T-cell (primary cell): ENCODE measurements at regions of chr5 and their contacts with region 1.

Region 1: GRCh38 chr5:141618804-141619554 is at the start of gene DIAPH1:
- DNase-seq: peak; percentile 94 to 99 (median 97)
- ATAC-seq: peak; percentile 92 to 94 (median 93)
- H3K4me3 ChIP-seq: peak within 1 kb of the TSS; percentile 94 to 97
- H3K4me3 Mint-ChIP-seq: peak within 1 kb of the TSS; percentile 94 to 99 (median 98)
- H3K27ac ChIP-seq: peak within 1 kb of the TSS; percentile 86
- H3K27ac Mint-ChIP-seq: peak within 1 kb of the TSS; percentile 96 to 97
- H3K4me1 ChIP-seq: peaks cover 29 to 39% of the 10 kb centered on the region in 2 experiments
- H3K4me1 Mint-ChIP-seq: peaks cover 49 to 61% (median 59%) of the 10 kb centered on the region in 3 donors
- H3K27me3 ChIP-seq: no peaks in the 10 kb centered on the region
- H3K27me3 Mint-ChIP-seq: no peaks in the 10 kb centered on the region
- total RNA-seq, gene DIAPH1: 190 to 271 (median 211) TPM

Region 2: DNA sequence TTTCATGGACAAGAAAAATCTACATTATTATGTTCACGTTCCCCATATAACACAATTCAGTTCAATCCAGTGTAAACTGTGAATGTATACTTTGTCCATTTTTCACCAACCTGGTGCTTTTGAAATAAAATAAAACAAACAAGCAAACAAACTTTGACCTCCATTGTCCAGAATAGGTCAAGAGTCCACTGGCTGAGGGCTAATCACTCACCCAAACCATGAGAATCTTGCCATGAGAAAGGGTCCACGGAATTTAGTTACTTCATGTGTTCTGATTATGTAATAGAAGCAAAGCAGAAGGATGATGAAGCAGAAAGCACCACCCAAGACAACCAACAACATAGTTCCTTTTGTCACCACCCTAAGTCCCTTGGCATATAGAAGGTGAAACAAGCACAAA is 28.9 kb before region 1 on chr5:
- CTCF ChIA-PET with region 1: interaction called, 70 to 514 read pairs
- POLR2A ChIA-PET with region 1: interaction called, 9 to 20 read pairs
- DNase-seq: no peak
- ATAC-seq: no peak
- H3K4me3 ChIP-seq: no peak overlapping the region
- H3K4me3 Mint-ChIP-seq: no peak overlapping the region
- H3K27ac ChIP-seq: no peak overlapping the region
- H3K27ac Mint-ChIP-seq: no peak overlapping the region
- H3K4me1 ChIP-seq: peaks cover 11 to 20% of the 10 kb centered on the region in 2 experiments
- H3K4me1 Mint-ChIP-seq: peaks cover 44 to 63% (median 62%) of the 10 kb centered on the region in 3 donors
- H3K27me3 ChIP-seq: no peaks in the 10 kb centered on the region
- H3K27me3 Mint-ChIP-seq: no peaks in the 10 kb centered on the region

Region 3: GRCh38 chr5:141598391-141599350 is 20.3 kb before region 1 on chr5:
- CTCF ChIA-PET with region 1: interaction called, 70 to 514 read pairs
- POLR2A ChIA-PET with region 1: interaction called, 4 to 7 read pairs
- DNase-seq: no peak
- ATAC-seq: peak; percentile 61 to 75 (median 71)
- H3K4me3 ChIP-seq: no peak overlapping the region
- H3K4me3 Mint-ChIP-seq: peak overlapping the region; percentile 2 to 47 (median 43)
- H3K27ac ChIP-seq: peak overlapping the region; percentile 60
- H3K27ac Mint-ChIP-seq: peak overlapping the region; percentile 82 to 90
- H3K4me1 ChIP-seq: peaks cover 50 to 61% of the 10 kb centered on the region in 2 experiments
- H3K4me1 Mint-ChIP-seq: peaks cover 75 to 86% (median 83%) of the 10 kb centered on the region in 3 donors
- H3K27me3 ChIP-seq: no peaks in the 10 kb centered on the region
- H3K27me3 Mint-ChIP-seq: no peaks in the 10 kb centered on the region

Region 4: DNA sequence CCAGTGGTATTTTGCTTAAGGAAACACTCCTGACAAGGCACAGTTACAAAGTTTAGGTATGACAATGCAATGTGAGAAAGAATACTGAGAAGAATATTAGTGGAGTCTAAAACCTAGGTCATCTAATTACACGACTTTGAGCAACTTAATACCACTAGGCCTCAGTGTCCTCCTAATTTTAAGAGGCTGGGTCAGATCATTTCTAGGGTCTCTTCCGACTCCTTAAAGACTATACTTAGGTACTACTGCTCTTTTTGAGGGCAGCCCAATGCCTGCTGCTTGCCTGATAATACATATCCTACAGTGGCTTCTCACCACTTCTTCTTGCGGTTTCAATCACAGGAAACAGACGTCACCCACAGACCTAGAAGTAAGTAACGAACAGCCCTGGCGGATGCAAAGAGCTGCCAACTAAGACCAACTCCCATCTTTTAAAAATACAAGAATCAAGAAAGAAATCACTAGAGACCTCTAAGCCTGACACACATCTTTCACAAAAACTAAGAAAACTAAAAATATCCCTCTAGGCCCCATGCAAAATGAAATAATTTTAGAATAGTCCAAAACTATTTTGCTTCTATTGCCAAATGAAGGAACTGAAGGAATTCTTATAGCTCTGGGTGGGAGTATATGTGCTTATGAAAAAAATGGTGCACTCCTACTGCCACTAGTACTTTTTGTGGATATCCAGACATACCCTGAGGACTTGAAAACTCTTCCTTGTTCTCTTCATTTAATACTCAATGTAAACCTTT is 13.3 kb before region 1 on chr5:
- CTCF ChIA-PET with region 1: interaction called, 5 to 86 read pairs
- POLR2A ChIA-PET with region 1: interaction called, 9 to 17 read pairs
- DNase-seq: peak; percentile 35 to 92 (median 75)
- ATAC-seq: peak; percentile 97 to 98 (median 98)
- H3K4me3 ChIP-seq: peak overlapping the region; percentile 32 to 38
- H3K4me3 Mint-ChIP-seq: peak overlapping the region; percentile 63 to 73 (median 72)
- H3K27ac ChIP-seq: peak overlapping the region; percentile 83
- H3K27ac Mint-ChIP-seq: peak overlapping the region; percentile 88 to 92
- H3K4me1 ChIP-seq: peaks cover 49 to 86% of the 10 kb centered on the region in 2 experiments
- H3K4me1 Mint-ChIP-seq: peaks cover 93 to 96% (median 94%) of the 10 kb centered on the region in 3 donors
- H3K27me3 ChIP-seq: no peaks in the 10 kb centered on the region
- H3K27me3 Mint-ChIP-seq: no peaks in the 10 kb centered on the region

Region 5: GRCh38 chr5:141636413-141637122 is 17.6 kb after region 1 on chr5 and contains the starts of genes HDAC3 and RELL2:
- CTCF ChIA-PET with region 1: interaction called, 5 to 62 read pairs
- POLR2A ChIA-PET with region 1: interaction called, 5 to 23 read pairs
- DNase-seq: peak; percentile 78 to 97 (median 90)
- ATAC-seq: peak; percentile 81 to 93 (median 89)
- H3K4me3 ChIP-seq: peak within 1 kb of the TSS; percentile 90 to 99
- H3K4me3 Mint-ChIP-seq: peak within 1 kb of the TSS; percentile 84 to 92 (median 91)
- H3K27ac ChIP-seq: peak within 1 kb of the TSS; percentile 79
- H3K27ac Mint-ChIP-seq: peak within 1 kb of the TSS; percentile 87 to 93
- H3K4me1 ChIP-seq: peaks cover 7 to 40% of the 10 kb centered on the region in 2 experiments
- H3K4me1 Mint-ChIP-seq: peaks cover 40 to 48% (median 44%) of the 10 kb centered on the region in 3 donors
- H3K27me3 ChIP-seq: no peaks in the 10 kb centered on the region
- H3K27me3 Mint-ChIP-seq: no peaks in the 10 kb centered on the region
- total RNA-seq, gene HDAC3: 68.5 to 78.5 (median 73.8) TPM
- total RNA-seq, gene RELL2: 15.3 to 30.7 (median 26.0) TPM

Region 6: GRCh38 chr5:141650851-141651727 is 32.1 kb after region 1 on chr5 and contains the start of gene FCHSD1:
- CTCF ChIA-PET with region 1: interaction called in 1 of 2 experiments, 10 read pairs
- POLR2A ChIA-PET with region 1: no interaction called
- DNase-seq: peak; percentile 35 to 84 (median 68)
- ATAC-seq: peak; percentile 92 to 94 (median 92)
- H3K4me3 ChIP-seq: peak within 1 kb of the TSS; percentile 54 to 80
- H3K4me3 Mint-ChIP-seq: peak within 1 kb of the TSS; percentile 86 to 93 (median 91)
- H3K27ac ChIP-seq: peak within 1 kb of the TSS; percentile 78
- H3K27ac Mint-ChIP-seq: peak within 1 kb of the TSS; percentile 94 to 97
- H3K4me1 ChIP-seq: peaks cover 3 to 31% of the 10 kb centered on the region in 2 experiments
- H3K4me1 Mint-ChIP-seq: peaks cover 30 to 50% (median 46%) of the 10 kb centered on the region in 3 donors
- H3K27me3 ChIP-seq: peaks cover 0 to 9% of the 10 kb centered on the region in 2 experiments
- H3K27me3 Mint-ChIP-seq: no peaks in the 10 kb centered on the region
- total RNA-seq, gene FCHSD1: 68.5 to 103 (median 101) TPM